GM18951 (cell line): ENCODE measurements at regions of chr1 and their contacts with region 1.

Region 1: DNA sequence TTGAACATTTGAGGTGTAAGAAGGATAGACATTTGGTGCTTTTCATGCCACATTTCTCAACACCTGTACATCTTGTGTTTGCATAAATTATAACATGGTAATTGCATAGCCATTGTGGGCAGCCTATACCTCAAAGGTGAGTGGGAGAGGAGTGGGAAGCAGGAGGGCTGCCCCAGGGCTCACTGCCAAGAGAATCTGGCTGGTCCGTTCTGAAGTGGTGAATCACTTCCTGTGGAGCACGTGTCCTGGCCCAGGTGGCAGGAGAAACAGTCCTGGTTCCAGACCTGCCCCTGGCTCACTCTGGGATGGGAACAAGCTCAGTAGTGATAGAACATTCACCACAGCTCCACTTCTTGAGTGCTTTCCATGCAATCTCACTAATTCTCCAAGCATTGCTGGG is 11.6 kb upstream of the OLFML2B start:
- POLR2A ChIP-seq: no peak

Region 2: GRCh38 chr1:161792740-161793139 is 242.5 kb before region 1 on chr1:
- in situ Hi-C with region 1: loop called (anchors 10 kb)
- POLR2A ChIP-seq: no peak

Region 3: GRCh38 chr1:161933592-161934588 is 101.4 kb before region 1 on chr1:
- in situ Hi-C with region 1: no loop called
- POLR2A ChIP-seq: no peak

Region 4: DNA sequence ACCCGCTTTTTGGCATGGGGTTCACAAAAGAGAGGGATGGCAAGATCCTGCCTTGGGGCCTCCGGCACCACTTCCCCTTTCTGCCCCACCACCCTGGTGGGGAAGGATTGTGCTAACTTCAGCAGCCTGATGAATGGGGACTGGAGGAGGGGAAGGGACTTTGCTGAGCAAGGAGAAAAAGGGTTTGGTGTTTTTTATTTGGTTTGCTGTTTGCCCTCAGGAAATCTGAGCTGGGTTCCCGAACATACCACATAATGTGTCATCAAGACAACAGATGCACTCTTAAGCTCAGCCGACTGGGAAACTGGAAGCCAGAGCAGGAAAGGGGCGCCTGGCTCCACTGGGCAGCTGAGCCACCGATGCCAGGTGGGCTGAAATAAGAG is 31.4 kb before region 1 on chr1:
- in situ Hi-C with region 1: no loop called
- POLR2A ChIP-seq: no peak